ENCODE measurements at regions of chr3 and their contacts with region 1.

Region 1: GRCh38 chr3:69691860-69692259 is 47.4 kb upstream of the MITF start:
- DNase-seq: no peak
- H3K4me3 ChIP-seq: no peak overlapping the region
- H3K27ac ChIP-seq: peak overlapping the region in 1 of 2 donors; percentile 14
- H3K4me1 ChIP-seq: peaks cover 6% of the 10 kb centered on the region in 2 donors
- H3K27me3 ChIP-seq: no peaks in the 10 kb centered on the region
- CTCF ChIP-seq: no peak
- POLR2A ChIP-seq: no peak

Region 2: DNA sequence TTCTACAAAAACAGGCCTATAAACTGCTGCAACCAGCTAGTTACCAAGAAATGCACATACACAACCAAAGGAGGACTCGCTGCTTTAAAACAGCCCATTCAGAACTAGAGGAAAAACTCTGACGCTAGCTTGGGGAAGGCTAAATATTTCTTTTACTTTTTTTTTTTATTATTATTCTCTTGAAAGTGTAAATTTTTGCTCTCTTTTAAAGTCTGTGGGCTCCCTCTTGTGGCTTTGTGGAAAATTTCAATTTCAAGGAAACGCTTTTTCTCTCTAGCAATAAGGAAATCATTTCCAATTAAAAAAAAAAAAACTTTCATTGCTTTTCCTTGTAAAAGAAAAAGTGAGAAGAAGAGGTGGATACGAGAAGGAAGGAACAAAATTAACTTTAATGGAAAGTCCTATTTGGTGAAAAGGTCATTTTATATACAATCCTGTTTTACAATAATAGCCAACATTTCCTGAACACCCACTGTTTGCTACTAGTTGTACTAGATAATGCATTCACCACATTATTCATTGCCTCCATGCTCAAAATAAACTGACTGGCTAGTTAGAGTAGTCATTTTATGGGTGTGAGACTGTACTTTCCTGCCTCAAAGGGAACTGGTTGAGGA is 256.5 kb after region 1 on chr3:
- intact Hi-C with region 1: loop called (anchors 5 kb)
- DNase-seq: no peak
- H3K4me3 ChIP-seq: no peak overlapping the region
- H3K27ac ChIP-seq: peak overlapping the region; percentile 21 to 62
- H3K4me1 ChIP-seq: peaks cover 0 to 4% of the 10 kb centered on the region in 2 donors
- H3K27me3 ChIP-seq: no peaks in the 10 kb centered on the region
- CTCF ChIP-seq: peak; percentile 42 to 64 (median 55)
- POLR2A ChIP-seq: no peak